Naive thymus-derived CD4-positive, alpha-beta T cell (primary cell): ENCODE measurements at regions of chr1 and their contacts with region 1.

Region 1: DNA sequence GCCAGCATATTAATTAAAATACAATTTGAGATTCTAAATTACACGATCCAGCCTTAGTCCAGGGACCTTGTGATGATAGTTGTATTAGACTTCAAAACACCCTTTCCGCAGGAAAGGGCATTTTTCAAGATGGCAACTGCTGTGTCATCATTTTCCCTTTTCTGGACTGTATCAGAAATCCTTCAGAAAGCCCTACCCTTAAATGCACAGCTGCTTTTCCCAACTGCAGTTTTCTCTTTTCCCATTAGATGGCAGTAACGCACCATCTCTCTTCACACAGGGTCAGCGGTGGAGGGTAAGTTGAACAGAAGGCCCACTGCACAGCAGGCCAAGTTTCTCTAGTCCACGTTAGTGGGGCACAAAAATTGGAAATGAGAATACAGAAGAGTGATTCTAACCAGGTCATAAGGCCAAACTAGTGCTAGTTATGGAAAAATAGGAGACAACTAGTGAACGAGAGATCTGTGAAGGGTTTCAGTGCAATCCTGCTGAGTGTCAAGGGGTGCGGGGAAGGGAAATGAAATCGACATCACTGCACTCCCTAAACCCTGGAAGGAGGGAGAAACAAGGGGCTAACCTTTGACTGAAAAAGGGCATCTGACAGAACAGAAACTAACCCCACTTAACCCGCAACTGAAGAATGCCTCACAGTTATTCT is 22.1 kb upstream of the TDRD10 start:
- DNase-seq: peak in 8 of 9 donors; percentile 39 to 78 (median 66)
- ATAC-seq: peak; percentile 90
- H3K4me3 ChIP-seq: no peak overlapping the region
- H3K4me3 Mint-ChIP-seq: no peak overlapping the region
- H3K27ac ChIP-seq: no peak overlapping the region
- H3K27ac Mint-ChIP-seq: peak overlapping the region in 1 of 9 donors; percentile 0
- H3K4me1 ChIP-seq: peaks cover 0 to 10% of the 10 kb centered on the region in 2 donors
- H3K4me1 Mint-ChIP-seq: peaks cover 12 to 27% (median 19%) of the 10 kb centered on the region in 7 donors
- H3K27me3 ChIP-seq: no peaks in the 10 kb centered on the region
- H3K27me3 Mint-ChIP-seq: peaks cover 0 to 14% (median 0%) of the 10 kb centered on the region in 5 donors

Region 2: GRCh38 chr1:154183045-154183915 is 296.6 kb before region 1 on chr1:
- CTCF ChIA-PET with region 1: no interaction called
- POLR2A ChIA-PET with region 1: no interaction called
- intact Hi-C with region 1: loop called in 1 of 2 experiments (anchors 2 kb)
- DNase-seq: peak; percentile 84 to 94 (median 94)
- ATAC-seq: peak; percentile 89
- H3K4me3 ChIP-seq: peak overlapping the region; percentile 93
- H3K4me3 Mint-ChIP-seq: peak overlapping the region; percentile 98 to 100 (median 100)
- H3K27ac ChIP-seq: peak overlapping the region; percentile 95
- H3K27ac Mint-ChIP-seq: peak overlapping the region; percentile 98 to 100 (median 99)
- H3K4me1 ChIP-seq: peaks cover 25 to 44% of the 10 kb centered on the region in 2 donors
- H3K4me1 Mint-ChIP-seq: peaks cover 44 to 49% (median 48%) of the 10 kb centered on the region in 7 donors
- H3K27me3 ChIP-seq: no peaks in the 10 kb centered on the region
- H3K27me3 Mint-ChIP-seq: peaks cover 0 to 7% (median 0%) of the 10 kb centered on the region in 5 donors

Region 3: DNA sequence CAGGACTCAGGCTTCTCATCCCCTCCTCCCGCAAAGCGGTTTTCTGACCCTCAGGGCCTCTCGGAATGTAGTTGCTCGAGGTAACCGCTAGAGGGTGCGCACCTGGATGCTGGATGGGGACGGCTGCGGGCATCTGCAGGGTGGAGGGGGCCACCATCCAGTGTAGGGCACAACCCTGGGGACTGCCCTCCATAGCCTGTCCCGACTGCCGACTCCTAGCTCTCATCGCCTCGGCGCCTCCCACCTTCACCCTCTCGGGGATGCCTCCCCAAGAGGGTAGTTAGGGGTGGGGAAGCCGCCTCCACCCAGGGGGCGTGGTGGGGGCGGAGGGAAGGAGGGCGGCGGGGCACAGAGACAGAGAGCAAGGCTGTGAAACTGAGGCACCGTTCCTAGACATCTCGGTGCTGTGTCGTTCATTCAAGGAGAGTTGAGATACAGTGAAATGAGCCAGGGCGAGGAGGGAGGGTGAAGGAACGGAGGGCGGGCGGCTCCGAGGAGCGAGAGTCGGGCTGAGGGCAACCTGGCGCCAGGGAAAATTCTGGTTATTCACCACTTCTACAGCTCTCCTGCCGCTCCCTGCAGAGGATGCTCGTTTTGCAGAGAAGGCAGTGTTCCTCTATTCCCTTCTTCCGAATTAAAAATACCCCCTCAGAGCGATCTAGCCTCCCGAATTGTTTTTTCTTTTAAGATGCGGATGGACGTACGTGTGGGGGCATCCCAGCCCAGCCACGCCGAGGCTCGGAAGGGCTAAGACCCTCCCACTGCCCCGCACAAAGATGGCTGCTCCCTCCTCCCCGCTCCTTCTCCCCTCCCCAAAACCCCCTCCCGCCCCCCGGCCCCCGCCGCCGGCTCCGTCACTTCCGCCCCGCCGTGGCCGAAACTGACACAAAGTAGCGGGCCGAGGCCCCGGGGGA is 155.0 kb before region 1 on chr1 and contains the start of gene ATP8B2:
- CTCF ChIA-PET with region 1: interaction called, 3 read pairs
- POLR2A ChIA-PET with region 1: no interaction called
- intact Hi-C with region 1: loop called in 1 of 2 experiments (anchors 1 kb)
- DNase-seq: peak; percentile 60 to 82 (median 77)
- ATAC-seq: peak; percentile 80
- H3K4me3 ChIP-seq: peak within 1 kb of the TSS; percentile 79
- H3K4me3 Mint-ChIP-seq: peak within 1 kb of the TSS; percentile 92 to 98 (median 96)
- H3K27ac ChIP-seq: peak within 1 kb of the TSS; percentile 94
- H3K27ac Mint-ChIP-seq: peak within 1 kb of the TSS; percentile 80 to 95 (median 92)
- H3K4me1 ChIP-seq: peaks cover 24 to 36% of the 10 kb centered on the region in 2 donors
- H3K4me1 Mint-ChIP-seq: peaks cover 27 to 42% (median 38%) of the 10 kb centered on the region in 7 donors
- H3K27me3 ChIP-seq: no peaks in the 10 kb centered on the region
- H3K27me3 Mint-ChIP-seq: peaks cover 0 to 31% (median 0%) of the 10 kb centered on the region in 5 donors
- total RNA-seq, gene ATP8B2: 105 to 130 (median 117) TPM

Region 4: GRCh38 chr1:154404984-154405761 is 74.7 kb before region 1 on chr1 and contains the start of gene IL6R:
- CTCF ChIA-PET with region 1: interaction called, 44 read pairs
- POLR2A ChIA-PET with region 1: interaction called, 8 read pairs
- intact Hi-C with region 1: loop called (anchors 1 kb)
- DNase-seq: peak; percentile 63 to 83 (median 77)
- ATAC-seq: peak; percentile 70
- H3K4me3 ChIP-seq: peak within 1 kb of the TSS; percentile 72
- H3K4me3 Mint-ChIP-seq: peak within 1 kb of the TSS; percentile 88 to 98 (median 96)
- H3K27ac ChIP-seq: peak within 1 kb of the TSS; percentile 75
- H3K27ac Mint-ChIP-seq: peak within 1 kb of the TSS; percentile 77 to 99 (median 95)
- H3K4me1 ChIP-seq: peaks cover 51 to 68% of the 10 kb centered on the region in 2 donors
- H3K4me1 Mint-ChIP-seq: peaks cover 50 to 75% (median 68%) of the 10 kb centered on the region in 7 donors
- H3K27me3 ChIP-seq: no peaks in the 10 kb centered on the region
- H3K27me3 Mint-ChIP-seq: peaks cover 0 to 4% (median 0%) of the 10 kb centered on the region in 5 donors
- total RNA-seq, gene IL6R: 5.2 to 91.6 (median 85.6) TPM

Region 5: GRCh38 chr1:154546264-154547063 is 66.6 kb after region 1 on chr1:
- CTCF ChIA-PET with region 1: interaction called, 35 read pairs
- POLR2A ChIA-PET with region 1: interaction called, 8 read pairs
- intact Hi-C with region 1: loop called (anchors 1 kb)
- DNase-seq: peak; percentile 18 to 56 (median 42)
- ATAC-seq: peak; percentile 89
- H3K4me3 ChIP-seq: no peak overlapping the region
- H3K4me3 Mint-ChIP-seq: no peak overlapping the region
- H3K27ac ChIP-seq: no peak overlapping the region
- H3K27ac Mint-ChIP-seq: peak overlapping the region in 5 of 9 donors; percentile 14 to 57 (median 21)
- H3K4me1 ChIP-seq: no peaks in the 10 kb centered on the region
- H3K4me1 Mint-ChIP-seq: peaks cover 2 to 28% (median 15%) of the 10 kb centered on the region in 7 donors
- H3K27me3 ChIP-seq: no peaks in the 10 kb centered on the region
- H3K27me3 Mint-ChIP-seq: peaks cover 0 to 10% (median 0%) of the 10 kb centered on the region in 5 donors

Region 6: GRCh38 chr1:154747740-154748404 is 268.0 kb after region 1 on chr1:
- CTCF ChIA-PET with region 1: interaction called, 4 read pairs
- POLR2A ChIA-PET with region 1: no interaction called
- intact Hi-C with region 1: loop called in 1 of 2 experiments (anchors 5 kb)
- DNase-seq: peak in 8 of 9 donors; percentile 51 to 64 (median 56)
- ATAC-seq: peak; percentile 82
- H3K4me3 ChIP-seq: peak overlapping the region; percentile 46
- H3K4me3 Mint-ChIP-seq: peak overlapping the region; percentile 71 to 88 (median 84)
- H3K27ac ChIP-seq: peak overlapping the region; percentile 73
- H3K27ac Mint-ChIP-seq: peak overlapping the region; percentile 90 to 98 (median 96)
- H3K4me1 ChIP-seq: peaks cover 39 to 47% of the 10 kb centered on the region in 2 donors
- H3K4me1 Mint-ChIP-seq: peaks cover 46 to 70% (median 51%) of the 10 kb centered on the region in 7 donors
- H3K27me3 ChIP-seq: no peaks in the 10 kb centered on the region
- H3K27me3 Mint-ChIP-seq: peaks cover 0 to 24% (median 0%) of the 10 kb centered on the region in 5 donors

Region 7: GRCh38 chr1:155017041-155017945 is 537.4 kb after region 1 on chr1:
- CTCF ChIA-PET with region 1: no interaction called
- POLR2A ChIA-PET with region 1: no interaction called
- intact Hi-C with region 1: loop called in 1 of 2 experiments (anchors 1 kb)
- DNase-seq: peak; percentile 85 to 93 (median 89)
- ATAC-seq: peak; percentile 98
- H3K4me3 ChIP-seq: peak overlapping the region; percentile 50
- H3K4me3 Mint-ChIP-seq: peak overlapping the region; percentile 51 to 84 (median 70)
- H3K27ac ChIP-seq: peak overlapping the region; percentile 83
- H3K27ac Mint-ChIP-seq: peak overlapping the region; percentile 38 to 98 (median 94)
- H3K4me1 ChIP-seq: peaks cover 38 to 65% of the 10 kb centered on the region in 2 donors
- H3K4me1 Mint-ChIP-seq: peaks cover 38 to 83% (median 71%) of the 10 kb centered on the region in 7 donors
- H3K27me3 ChIP-seq: no peaks in the 10 kb centered on the region
- H3K27me3 Mint-ChIP-seq: no peaks in the 10 kb centered on the region